ENCODE measurements at regions of chr4 and their contacts with region 1.

Region 1: DNA sequence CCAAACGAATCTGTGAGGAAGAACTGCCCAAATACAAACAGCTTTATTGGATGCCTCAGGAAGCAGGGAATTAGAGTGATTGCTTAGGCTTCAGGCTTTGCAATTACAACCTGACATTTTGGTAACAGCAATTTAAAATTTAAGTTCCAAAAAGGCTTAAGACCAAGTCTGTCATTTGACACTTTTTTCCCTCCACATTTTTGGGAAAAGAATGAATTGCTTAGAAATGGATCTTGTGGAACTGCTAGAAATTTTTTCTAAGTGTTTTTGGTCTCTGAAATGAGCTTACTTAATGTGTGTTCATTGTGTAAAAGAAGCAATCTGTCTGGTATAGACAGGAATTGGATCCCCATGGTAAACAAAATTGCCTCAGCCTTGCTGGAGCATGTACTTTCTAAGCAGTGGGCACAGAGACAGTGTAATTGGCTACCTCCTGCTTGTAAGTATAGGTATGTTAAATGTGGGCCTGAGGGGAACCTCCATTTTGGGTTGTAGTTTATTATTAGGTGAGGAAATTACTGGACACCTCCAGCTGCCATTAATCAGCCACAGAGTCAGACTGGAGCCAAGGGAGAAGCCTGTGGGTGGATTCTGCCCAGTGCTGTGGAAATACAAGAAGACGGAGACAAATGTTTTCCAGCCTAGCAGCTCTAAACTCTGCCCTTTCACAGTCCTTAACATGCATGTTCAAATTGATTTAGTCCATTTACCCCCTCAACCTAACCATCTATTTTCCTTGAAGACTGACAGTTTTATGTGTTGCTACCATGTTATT is 472.9 kb downstream of the SPRY1 start:
- DNase-seq: peak in 1 of 5 donors; percentile 22
- H3K4me3 ChIP-seq: no peak overlapping the region
- H3K27ac ChIP-seq: no peak overlapping the region
- H3K4me1 ChIP-seq: no peaks in the 10 kb centered on the region
- H3K27me3 ChIP-seq: no peaks in the 10 kb centered on the region
- CTCF ChIP-seq: no peak
- EP300 ChIP-seq: no peak
- POLR2A ChIP-seq: no peak

Region 2: GRCh38 chr4:123889507-123889906 is 20.0 kb after region 1 on chr4:
- intact Hi-C with region 1: loop called in 1 of 4 experiments (anchors 2 kb)
- DNase-seq: no peak
- H3K4me3 ChIP-seq: no peak overlapping the region
- H3K27ac ChIP-seq: no peak overlapping the region
- H3K4me1 ChIP-seq: peaks cover 5% of the 10 kb centered on the region
- H3K27me3 ChIP-seq: no peaks in the 10 kb centered on the region
- CTCF ChIP-seq: no peak
- EP300 ChIP-seq: no peak
- POLR2A ChIP-seq: no peak